Endothelial cell of umbilical vein (primary cell): ENCODE measurements at regions of chr14 and their contacts with region 1.

Region 1: DNA sequence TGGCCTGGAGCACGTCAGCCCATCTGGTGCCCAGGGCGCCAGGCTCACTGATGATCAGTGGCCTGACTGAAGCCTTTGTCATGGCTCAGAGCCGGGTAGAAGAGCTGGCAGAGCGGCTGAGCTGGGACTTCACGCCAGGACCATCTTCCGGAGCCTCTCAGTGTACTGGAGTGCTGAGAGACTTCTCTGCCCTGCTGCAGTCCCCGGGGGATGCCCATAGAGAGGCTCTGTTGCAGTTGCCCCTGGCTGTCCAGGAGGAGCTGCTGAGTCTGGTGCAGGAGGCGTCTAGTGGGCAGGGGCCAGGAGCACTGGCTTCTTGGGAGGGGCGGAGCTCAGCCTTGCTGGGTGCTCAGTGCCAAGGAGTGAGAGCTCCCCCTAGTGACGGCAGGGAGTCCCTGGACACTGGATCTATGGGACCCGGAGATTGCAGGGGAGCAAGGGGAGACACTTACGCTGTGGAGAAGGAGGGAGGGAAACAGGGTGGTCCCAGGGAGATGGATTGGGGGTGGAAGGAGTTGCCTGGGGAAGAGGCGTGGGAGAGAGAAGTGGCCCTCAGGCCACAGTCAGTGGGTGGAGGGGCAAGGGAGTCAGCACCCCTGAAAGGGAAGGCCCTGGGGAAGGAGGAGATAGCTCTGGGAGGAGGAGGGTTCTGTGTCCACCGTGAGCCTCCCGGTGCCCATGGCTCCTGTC is 2.0 kb downstream of the KHNYN start:
- DNase-seq: peak; percentile 92
- H3K4me3 ChIP-seq: peak overlapping the region in 2 of 3 experiments; percentile 78 to 89
- H3K27ac ChIP-seq: peak overlapping the region; percentile 94
- H3K4me1 ChIP-seq: peaks cover 46% of the 10 kb centered on the region
- H3K27me3 ChIP-seq: no peaks in the 10 kb centered on the region
- CTCF ChIP-seq: peak; percentile 95 to 97
- POLR2A ChIP-seq: no peak

Region 2: DNA sequence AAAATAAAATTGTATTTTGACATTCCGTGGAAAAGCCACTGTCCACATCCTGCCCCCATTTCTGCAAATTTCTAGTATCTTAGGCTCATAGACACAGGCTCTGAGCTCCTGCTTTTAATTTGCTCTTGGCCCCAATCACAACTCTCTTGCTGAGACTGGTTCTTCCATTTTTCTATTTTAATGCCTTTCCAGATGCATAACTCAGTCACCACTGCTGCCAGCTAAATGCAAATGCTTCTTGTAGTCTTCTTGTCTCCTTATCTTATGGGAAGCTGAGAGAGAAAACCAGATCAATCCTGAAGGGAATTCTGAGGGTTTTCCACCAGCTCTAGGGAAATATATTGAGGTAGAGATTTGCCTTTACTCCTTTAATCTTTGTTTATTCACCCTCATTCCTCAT is 646.5 kb before region 1 on chr14:
- CTCF ChIA-PET with region 1: no interaction called
- POLR2A ChIA-PET with region 1: no interaction called
- dilution Hi-C with region 1: no loop called
- intact Hi-C with region 1: no loop called
- DNase-seq: no peak
- H3K4me3 ChIP-seq: no peak overlapping the region
- H3K27ac ChIP-seq: no peak overlapping the region
- H3K4me1 ChIP-seq: no peaks in the 10 kb centered on the region
- H3K27me3 ChIP-seq: peaks cover 5 to 11% of the 10 kb centered on the region in 2 experiments
- CTCF ChIP-seq: no peak
- POLR2A ChIP-seq: no peak

Region 3: DNA sequence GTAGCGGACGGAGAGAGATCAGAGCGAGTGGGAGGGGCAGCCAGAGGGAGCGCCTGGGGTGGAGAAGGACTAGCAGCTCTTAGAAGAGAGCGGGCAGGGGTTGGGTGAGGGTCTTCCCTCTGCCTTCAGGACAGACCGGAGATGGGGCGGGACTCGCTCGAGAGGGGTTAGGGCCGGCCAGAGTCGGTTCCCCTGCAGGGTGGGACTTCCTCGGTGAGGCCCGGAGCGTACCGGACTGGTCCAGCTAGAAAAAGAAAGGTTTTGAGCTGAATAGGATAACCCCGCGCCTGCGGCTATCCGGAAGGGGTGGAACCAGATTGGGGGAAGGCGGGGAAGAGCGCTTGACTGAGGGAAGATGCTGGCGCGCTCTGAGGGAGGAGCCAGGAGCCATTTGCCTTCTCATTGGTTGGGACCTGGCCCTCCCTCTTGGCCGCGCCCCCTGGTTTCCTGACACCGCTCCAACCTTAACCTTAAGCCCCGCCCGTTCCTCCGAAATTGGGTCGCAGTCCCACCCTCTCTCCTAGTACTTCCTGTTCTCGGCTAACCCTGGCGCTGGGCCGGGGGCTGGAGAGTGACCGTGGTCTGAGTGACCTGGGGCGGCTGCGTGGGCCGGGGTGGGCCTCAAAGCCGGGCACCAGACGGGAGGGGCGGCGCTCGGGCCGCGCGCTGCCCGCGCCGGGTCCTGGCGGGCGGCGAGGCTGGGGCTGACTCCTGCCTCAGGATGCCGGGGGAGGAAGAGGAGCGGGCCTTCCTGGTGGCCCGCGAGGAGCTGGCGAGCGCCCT is 284.5 kb before region 1 on chr14 and contains the start of gene RNF31:
- CTCF ChIA-PET with region 1: no interaction called
- POLR2A ChIA-PET with region 1: no interaction called
- dilution Hi-C with region 1: no loop called
- intact Hi-C with region 1: loop called (anchors 5 kb)
- DNase-seq: peak; percentile 97
- H3K4me3 ChIP-seq: peak within 1 kb of the TSS; percentile 59 to 86 (median 79)
- H3K27ac ChIP-seq: peak within 1 kb of the TSS; percentile 52
- H3K4me1 ChIP-seq: peaks cover 17% of the 10 kb centered on the region
- H3K27me3 ChIP-seq: no peaks in the 10 kb centered on the region
- CTCF ChIP-seq: no peak
- POLR2A ChIP-seq: peak; percentile 75
- total RNA-seq, gene RNF31: 66.5 and 69.7 TPM in 2 replicates

Region 4: DNA sequence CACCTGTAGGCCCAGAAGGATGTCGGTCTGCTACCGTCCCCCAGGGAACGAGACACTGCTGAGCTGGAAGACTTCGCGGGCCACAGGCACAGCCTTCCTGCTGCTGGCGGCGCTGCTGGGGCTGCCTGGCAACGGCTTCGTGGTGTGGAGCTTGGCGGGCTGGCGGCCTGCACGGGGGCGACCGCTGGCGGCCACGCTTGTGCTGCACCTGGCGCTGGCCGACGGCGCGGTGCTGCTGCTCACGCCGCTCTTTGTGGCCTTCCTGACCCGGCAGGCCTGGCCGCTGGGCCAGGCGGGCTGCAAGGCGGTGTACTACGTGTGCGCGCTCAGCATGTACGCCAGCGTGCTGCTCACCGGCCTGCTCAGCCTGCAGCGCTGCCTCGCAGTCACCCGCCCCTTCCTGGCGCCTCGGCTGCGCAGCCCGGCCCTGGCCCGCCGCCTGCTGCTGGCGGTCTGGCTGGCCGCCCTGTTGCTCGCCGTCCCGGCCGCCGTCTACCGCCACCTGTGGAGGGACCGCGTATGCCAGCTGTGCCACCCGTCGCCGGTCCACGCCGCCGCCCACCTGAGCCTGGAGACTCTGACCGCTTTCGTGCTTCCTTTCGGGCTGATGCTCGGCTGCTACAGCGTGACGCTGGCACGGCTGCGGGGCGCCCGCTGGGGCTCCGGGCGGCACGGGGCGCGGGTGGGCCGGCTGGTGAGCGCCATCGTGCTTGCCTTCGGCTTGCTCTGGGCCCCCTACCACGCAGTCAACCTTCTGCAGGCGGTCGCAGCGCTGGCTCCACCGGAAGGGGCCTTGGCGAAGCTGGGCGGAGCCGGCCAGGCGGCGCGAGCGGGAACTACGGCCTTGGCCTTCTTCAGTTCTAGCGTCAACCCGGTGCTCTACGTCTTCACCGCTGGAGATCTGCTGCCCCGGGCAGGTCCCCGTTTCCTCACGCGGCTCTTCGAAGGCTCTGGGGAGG is 120.8 kb before region 1 on chr14 and contains the start of gene LTB4R:
- CTCF ChIA-PET with region 1: interaction called, 32 read pairs
- POLR2A ChIA-PET with region 1: no interaction called
- dilution Hi-C with region 1: no loop called
- intact Hi-C with region 1: loop called (anchors 1 kb)
- DNase-seq: peak; percentile 88
- H3K4me3 ChIP-seq: peak within 1 kb of the TSS in 1 of 3 experiments; percentile 19
- H3K27ac ChIP-seq: peak within 1 kb of the TSS; percentile 91
- H3K4me1 ChIP-seq: peaks cover 60% of the 10 kb centered on the region
- H3K27me3 ChIP-seq: no peaks in the 10 kb centered on the region
- CTCF ChIP-seq: peak; percentile 20 to 53
- POLR2A ChIP-seq: peak; percentile 34
- total RNA-seq, gene LTB4R: 6.2 and 10.5 TPM in 2 replicates

Region 5: DNA sequence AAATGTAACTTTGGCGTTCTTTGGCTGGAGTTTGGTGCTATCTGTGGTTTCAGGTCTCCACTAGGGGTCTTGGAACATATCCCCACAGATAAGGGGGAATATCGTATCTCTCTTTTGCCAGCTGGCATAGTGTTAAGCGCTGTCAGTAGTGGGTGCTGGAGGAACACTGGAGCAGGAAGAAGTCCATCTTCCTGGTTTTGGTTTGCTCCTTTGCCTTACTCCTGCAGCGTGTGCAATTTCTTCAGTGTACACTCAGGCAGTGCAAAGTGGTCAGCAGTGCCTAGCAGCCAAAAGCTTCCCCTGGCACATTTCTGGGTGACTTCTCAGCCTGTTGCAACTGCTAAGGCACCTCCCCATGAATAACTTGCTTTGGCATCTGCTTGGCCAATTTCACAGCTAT is 80.2 kb before region 1 on chr14:
- CTCF ChIA-PET with region 1: interaction called, 14 read pairs
- POLR2A ChIA-PET with region 1: no interaction called
- dilution Hi-C with region 1: no loop called
- intact Hi-C with region 1: no loop called
- DNase-seq: peak; percentile 18
- H3K4me3 ChIP-seq: no peak overlapping the region
- H3K27ac ChIP-seq: no peak overlapping the region
- H3K4me1 ChIP-seq: no peaks in the 10 kb centered on the region
- H3K27me3 ChIP-seq: peaks cover 30 to 35% of the 10 kb centered on the region in 2 experiments
- CTCF ChIP-seq: peak in 1 of 2 donors; percentile 5
- POLR2A ChIP-seq: no peak

Region 6: GRCh38 chr14:24398653-24399446 is 32.9 kb before region 1 on chr14 and contains the start of gene NYNRIN:
- CTCF ChIA-PET with region 1: interaction called, 34 read pairs
- POLR2A ChIA-PET with region 1: interaction called, 4 read pairs
- dilution Hi-C with region 1: no loop called
- intact Hi-C with region 1: no loop called
- DNase-seq: peak; percentile 58
- H3K4me3 ChIP-seq: peak within 1 kb of the TSS; percentile 69 to 78 (median 69)
- H3K27ac ChIP-seq: no peak within 1 kb of the TSS
- H3K4me1 ChIP-seq: peaks cover 31% of the 10 kb centered on the region
- H3K27me3 ChIP-seq: no peaks in the 10 kb centered on the region
- CTCF ChIP-seq: no peak
- POLR2A ChIP-seq: peak; percentile 48
- total RNA-seq, gene NYNRIN: 42.8 and 45.1 TPM in 2 replicates

Region 7: GRCh38 chr14:24442273-24443052 is 10.7 kb after region 1 on chr14 and contains the start of gene SDR39U1:
- CTCF ChIA-PET with region 1: interaction called, 15 read pairs
- POLR2A ChIA-PET with region 1: interaction called, 5 read pairs
- dilution Hi-C with region 1: no loop called
- intact Hi-C with region 1: no loop called
- DNase-seq: peak; percentile 99
- H3K4me3 ChIP-seq: peak within 1 kb of the TSS; percentile 74 to 88 (median 76)
- H3K27ac ChIP-seq: peak within 1 kb of the TSS; percentile 98
- H3K4me1 ChIP-seq: peaks cover 25% of the 10 kb centered on the region
- H3K27me3 ChIP-seq: no peaks in the 10 kb centered on the region
- CTCF ChIP-seq: no peak
- POLR2A ChIP-seq: peak; percentile 74
- total RNA-seq, gene SDR39U1: 38.6 and 40.2 TPM in 2 replicates